ENCODE measurements at regions of chr10 and their contacts with region 1.

Region 1: DNA sequence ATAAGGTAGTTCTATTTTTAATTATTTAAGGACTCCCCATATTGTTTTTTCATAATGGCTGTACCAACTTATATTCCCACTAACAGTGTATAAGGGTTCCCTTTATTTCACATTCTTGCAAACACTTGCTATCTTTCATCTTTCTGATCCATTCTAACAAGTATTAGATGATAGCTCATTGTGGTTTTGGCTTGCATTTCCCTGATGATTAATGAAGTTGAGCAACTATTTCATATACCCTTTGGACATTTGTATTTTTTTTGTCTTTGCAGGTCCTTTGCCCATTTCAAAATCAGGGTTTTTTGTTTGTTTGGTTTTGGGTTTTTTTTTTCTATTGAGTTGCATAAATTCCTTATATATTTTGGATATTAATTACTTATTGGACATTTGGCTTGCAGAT is 107.2 kb downstream of the EPC1 start:
- DNase-seq: no peak
- H3K4me3 Mint-ChIP-seq: no peak overlapping the region
- H3K27ac Mint-ChIP-seq: no peak overlapping the region
- H3K4me1 Mint-ChIP-seq: peaks cover 16% of the 10 kb centered on the region
- H3K27me3 Mint-ChIP-seq: no peaks in the 10 kb centered on the region

Region 2: DNA sequence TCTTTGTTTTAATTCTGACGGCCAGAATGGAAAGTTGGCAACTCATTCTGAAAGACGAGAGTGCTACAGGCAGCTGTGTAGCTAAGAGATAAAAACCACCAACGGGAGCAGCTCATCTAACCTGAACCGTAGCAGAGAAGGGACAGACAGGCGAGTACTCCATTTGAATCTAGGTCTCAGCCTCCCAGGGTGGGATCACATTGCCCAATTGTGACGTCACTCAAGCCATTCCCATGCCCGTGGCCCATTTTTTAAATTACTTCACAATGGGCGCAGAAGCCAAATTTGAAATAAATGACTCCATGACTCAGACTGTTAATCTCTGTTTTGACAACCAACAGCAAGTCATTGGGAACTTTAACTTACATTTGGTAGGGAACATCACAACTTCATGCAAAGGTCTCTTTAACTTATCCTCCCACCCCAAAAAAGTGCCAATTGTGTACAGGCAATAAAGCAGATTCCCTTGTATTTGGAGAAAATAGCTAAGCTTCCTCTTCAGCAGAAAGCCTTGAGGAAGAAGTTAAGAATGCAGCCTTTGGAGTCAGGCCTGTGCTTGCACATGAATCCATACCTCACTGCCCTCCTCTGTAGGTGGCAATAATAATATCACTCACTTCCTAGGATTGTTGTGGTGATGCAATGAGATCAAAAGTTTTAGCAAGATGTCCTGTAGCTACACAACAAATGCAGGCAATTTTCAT is 90.4 kb before region 1 on chr10:
- intact Hi-C with region 1: loop called (anchors 1 kb)
- DNase-seq: peak; percentile 36
- H3K4me3 Mint-ChIP-seq: peak overlapping the region; percentile 45
- H3K27ac Mint-ChIP-seq: peak overlapping the region; percentile 94
- H3K4me1 Mint-ChIP-seq: peaks cover 41% of the 10 kb centered on the region
- H3K27me3 Mint-ChIP-seq: no peaks in the 10 kb centered on the region

Region 3: DNA sequence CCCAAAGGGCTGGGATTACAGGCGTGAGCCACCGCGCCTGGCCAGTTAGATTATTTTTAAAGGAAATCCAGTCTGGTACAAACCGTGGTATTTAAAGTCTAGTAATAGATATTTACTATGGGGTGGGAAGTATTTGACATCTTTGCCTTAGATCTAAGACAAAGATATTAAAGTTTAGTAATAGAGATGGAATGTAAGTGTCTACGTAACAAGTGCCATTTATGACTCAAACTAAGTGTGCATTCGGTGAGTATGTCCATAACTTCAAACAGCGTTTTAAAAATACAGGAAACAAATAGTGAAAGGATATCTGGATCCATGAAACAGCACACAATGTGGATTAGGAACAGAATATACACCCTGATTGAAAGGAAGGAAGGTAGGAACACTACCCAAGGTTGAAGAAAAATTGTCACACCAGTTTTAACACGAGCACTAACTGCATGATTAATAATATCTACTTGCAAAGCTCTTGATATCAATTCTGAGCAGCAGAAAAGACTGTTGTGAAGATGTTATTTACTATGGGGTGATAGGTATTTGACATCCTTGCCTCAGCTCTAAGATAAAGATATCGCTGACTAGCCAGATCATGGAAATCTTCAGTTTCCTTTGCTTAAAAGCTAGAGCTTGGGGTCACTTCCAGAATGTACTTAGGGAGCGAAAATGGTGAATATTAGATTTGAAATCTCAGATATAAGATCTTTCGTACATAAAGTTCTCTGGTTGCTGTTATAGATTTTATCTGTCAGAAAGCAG is 58.5 kb after region 1 on chr10:
- intact Hi-C with region 1: no loop called
- DNase-seq: no peak
- H3K4me3 Mint-ChIP-seq: peak overlapping the region; percentile 15
- H3K27ac Mint-ChIP-seq: peak overlapping the region; percentile 67
- H3K4me1 Mint-ChIP-seq: peaks cover 31% of the 10 kb centered on the region
- H3K27me3 Mint-ChIP-seq: no peaks in the 10 kb centered on the region

Region 4: GRCh38 chr10:32318476-32318896 is 78.7 kb after region 1 on chr10:
- intact Hi-C with region 1: loop called (anchors 1 kb)
- DNase-seq: no peak
- H3K4me3 Mint-ChIP-seq: peak overlapping the region; percentile 5
- H3K27ac Mint-ChIP-seq: peak overlapping the region; percentile 69
- H3K4me1 Mint-ChIP-seq: peaks cover 57% of the 10 kb centered on the region
- H3K27me3 Mint-ChIP-seq: no peaks in the 10 kb centered on the region

Region 5: DNA sequence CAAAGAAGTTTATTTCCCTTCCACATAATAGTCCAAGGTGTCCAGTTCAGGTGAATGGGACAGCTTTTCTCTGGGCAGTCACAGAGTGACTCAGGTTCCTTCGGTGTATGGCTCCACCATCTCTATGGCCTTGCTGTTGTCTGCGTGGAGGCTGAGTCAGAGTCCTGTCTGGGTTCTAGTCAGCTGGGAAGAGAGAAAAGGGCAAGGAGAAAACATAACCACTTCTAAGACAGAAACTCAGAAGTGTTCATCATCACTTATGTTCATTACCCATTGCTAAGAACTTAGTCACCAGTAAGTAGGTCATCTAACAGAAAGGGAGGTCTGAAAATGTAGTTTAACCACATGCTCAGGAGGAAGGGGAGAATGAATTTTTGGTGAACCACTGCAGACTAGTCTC is 173.7 kb after region 1 on chr10:
- intact Hi-C with region 1: loop called (anchors 1 kb)
- DNase-seq: no peak
- H3K4me3 Mint-ChIP-seq: no peak overlapping the region
- H3K27ac Mint-ChIP-seq: no peak overlapping the region
- H3K4me1 Mint-ChIP-seq: peaks cover 12% of the 10 kb centered on the region
- H3K27me3 Mint-ChIP-seq: peaks cover 2% of the 10 kb centered on the region